Heart left ventricle (tissue), 16 donors: ENCODE measurements at regions of chr6 and their contacts with region 1.

Region 1: DNA sequence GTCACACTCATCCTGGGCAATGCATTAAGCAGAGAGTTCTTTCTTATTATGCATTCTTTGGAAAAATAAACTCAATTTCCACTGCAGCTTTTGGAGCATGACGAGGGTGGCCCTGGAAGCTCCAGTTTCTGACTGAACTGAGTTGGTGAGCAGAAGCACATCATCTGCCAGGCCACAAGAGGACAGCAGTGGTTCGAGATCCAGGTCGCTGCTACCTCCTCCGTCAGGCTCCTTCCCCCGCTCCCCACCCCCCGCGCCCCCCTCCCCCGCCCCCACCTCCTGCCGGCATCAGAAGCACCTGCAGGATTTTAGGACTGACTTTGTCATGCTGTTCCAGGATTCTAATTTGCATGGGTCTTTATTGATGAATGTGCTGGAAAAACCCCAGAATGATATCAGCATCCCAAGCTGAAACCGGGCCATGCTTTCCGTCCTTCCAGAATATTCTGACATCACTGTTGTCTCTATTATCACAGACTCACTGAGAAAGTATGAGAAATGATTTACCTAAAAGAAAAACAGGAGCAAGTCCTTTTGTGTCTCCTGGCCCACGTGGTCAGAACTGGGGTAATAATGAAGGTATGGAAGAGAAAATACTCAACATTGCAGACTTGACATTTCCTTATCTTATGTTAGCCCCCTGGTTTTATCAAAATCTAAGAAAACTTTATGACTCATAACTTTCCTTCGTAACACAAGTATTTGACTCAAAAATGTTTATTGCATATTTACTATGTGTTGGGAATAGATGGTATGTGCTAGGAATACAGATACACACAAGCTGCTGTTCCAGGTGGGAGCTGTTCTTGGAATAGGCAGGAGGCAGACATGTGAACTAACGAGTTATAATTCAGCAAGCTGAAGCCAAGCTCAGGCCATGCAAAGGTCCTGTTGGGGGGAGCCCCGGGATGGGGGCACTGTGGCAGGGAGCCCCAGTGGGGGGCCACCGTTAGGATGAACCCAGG is 220.2 kb upstream of the EXOC2 start:
- DNase-seq: no peak
- ATAC-seq: no peak
- H3K4me3 ChIP-seq: no peak overlapping the region
- H3K27ac ChIP-seq: no peak overlapping the region
- H3K4me1 ChIP-seq: no peaks in the 10 kb centered on the region
- H3K27me3 ChIP-seq: peaks cover 0 to 39% (median 2%) of the 10 kb centered on the region in 9 donors
- CTCF ChIP-seq: peak in 7 of 12 donors; percentile 15 to 53 (median 36)
- POLR2A ChIP-seq: no peak

Region 2: GRCh38 chr6:1381481-1382330 is 468.6 kb after region 1 on chr6:
- intact Hi-C with region 1: loop called in 9 of 10 experiments (anchors 2 to 10 kb)
- DNase-seq: peak in 1 of 5 donors; percentile 47
- ATAC-seq: peak; percentile 26 to 87 (median 70)
- H3K4me3 ChIP-seq: peak overlapping the region in 10 of 12 donors; percentile 10 to 46 (median 37)
- H3K27ac ChIP-seq: peak overlapping the region in 1 of 12 donors; percentile 84
- H3K4me1 ChIP-seq: peaks cover 0 to 50% (median 26%) of the 10 kb centered on the region in 12 donors
- H3K27me3 ChIP-seq: peaks cover 88 to 100% (median 97%) of the 10 kb centered on the region in 9 donors
- CTCF ChIP-seq: peak; percentile 62 to 94 (median 90)
- POLR2A ChIP-seq: no peak

Region 3: DNA sequence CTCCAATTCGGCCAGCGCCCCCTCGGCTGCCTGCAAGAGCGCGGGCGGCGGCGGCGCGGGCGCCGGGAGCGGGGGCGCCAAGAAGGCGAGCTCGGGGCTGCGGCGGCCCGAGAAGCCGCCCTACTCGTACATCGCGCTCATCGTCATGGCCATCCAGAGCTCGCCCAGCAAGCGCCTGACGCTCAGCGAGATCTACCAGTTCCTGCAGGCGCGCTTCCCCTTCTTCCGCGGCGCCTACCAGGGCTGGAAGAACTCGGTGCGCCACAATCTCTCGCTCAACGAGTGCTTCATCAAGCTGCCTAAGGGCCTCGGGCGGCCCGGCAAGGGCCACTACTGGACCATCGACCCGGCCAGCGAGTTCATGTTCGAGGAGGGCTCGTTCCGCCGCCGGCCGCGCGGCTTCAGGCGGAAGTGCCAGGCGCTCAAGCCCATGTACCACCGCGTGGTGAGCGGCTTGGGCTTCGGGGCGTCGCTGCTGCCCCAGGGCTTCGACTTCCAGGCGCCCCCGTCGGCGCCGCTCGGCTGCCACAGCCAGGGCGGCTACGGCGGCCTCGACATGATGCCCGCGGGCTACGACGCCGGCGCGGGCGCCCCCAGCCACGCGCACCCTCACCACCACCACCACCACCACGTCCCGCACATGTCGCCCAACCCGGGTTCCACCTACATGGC is 477.1 kb after region 1 on chr6:
- intact Hi-C with region 1: loop called in 4 of 10 experiments (anchors 5 to 10 kb)
- DNase-seq: peak in 1 of 5 donors; percentile 44
- ATAC-seq: peak in 2 of 4 donors; percentile 23 to 58
- H3K4me3 ChIP-seq: peak overlapping the region; percentile 7 to 57 (median 44)
- H3K27ac ChIP-seq: peak overlapping the region in 1 of 12 donors; percentile 87
- H3K4me1 ChIP-seq: peaks cover 0 to 52% (median 12%) of the 10 kb centered on the region in 12 donors
- H3K27me3 ChIP-seq: peaks cover 56 to 96% (median 86%) of the 10 kb centered on the region in 9 donors
- CTCF ChIP-seq: no peak
- POLR2A ChIP-seq: no peak